Mammary epithelial cell (primary cell): ENCODE measurements at regions of chr6 and their contacts with region 1.

Region 1: DNA sequence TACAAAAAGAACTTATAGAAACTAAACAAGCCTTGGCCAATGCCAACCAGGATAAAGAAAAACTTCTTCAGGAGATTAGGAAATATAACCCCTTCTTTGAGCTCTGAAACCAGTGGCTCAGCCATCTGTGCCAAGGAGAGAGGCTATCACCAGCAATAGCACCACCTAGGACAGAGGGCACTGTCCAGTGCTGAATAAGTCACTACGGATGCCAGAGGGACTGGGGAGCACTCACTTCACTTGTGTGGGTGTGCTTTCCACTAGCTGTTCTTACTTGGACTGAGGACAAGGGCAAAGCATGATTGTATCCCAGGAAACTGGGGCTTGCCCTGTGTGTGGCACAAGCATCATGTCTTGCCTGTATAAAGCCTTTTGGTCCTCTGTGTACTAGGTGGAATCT is 15.5 kb downstream of the TAF11 start:
- DNase-seq: no peak
- H3K4me3 ChIP-seq: no peak overlapping the region
- H3K27ac ChIP-seq: no peak overlapping the region
- H3K4me1 ChIP-seq: no peaks in the 10 kb centered on the region
- H3K27me3 ChIP-seq: no peaks in the 10 kb centered on the region
- CTCF ChIP-seq: no peak

Region 2: DNA sequence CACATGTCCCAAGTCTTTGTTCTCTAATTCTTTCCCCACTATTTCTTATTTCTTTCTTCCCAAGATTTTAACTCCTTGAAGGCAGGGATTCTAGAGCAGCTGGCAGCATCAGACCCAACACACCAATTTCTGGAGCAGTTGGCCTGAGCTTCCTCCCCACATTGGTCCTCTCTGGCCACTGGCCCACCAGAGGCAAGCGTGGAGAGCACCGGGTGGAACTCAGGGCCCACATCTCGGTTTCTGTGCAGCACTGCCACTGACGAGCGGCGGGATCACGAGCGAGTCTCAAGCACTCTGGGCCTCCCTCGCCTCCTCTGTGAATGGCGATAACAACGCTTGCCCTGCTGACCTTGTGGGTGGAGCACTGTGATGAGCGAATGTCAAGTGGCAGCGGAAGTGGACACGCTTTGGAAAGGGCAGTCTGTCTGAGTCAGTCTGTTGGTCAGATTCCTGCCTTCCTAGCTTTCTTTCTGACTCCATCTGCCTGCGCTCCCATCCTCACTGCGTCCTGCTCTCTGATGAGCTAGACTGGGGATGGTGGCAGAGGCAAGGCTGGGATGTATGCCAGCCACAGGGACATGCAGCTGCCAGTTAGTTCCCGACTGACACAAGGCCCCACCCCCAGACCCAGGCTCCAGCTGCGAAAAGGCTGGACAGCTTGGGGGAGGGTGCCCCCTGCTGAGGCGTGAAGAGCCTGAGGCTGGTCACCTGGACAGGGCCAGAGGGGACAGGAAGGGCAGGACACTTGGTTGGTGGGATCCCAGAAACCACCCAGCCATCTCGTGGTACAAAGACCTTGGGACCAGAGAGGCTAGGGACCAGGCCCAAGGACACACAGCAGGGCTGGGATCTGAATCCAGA is 311.7 kb before region 1 on chr6:
- CTCF ChIA-PET with region 1: no interaction called
- dilution Hi-C with region 1: no loop called
- in situ Hi-C with region 1: no loop called
- intact Hi-C with region 1: no loop called
- DNase-seq: no peak
- H3K4me3 ChIP-seq: no peak overlapping the region
- H3K27ac ChIP-seq: no peak overlapping the region
- H3K4me1 ChIP-seq: no peaks in the 10 kb centered on the region
- H3K27me3 ChIP-seq: no peaks in the 10 kb centered on the region
- CTCF ChIP-seq: no peak

Region 3: DNA sequence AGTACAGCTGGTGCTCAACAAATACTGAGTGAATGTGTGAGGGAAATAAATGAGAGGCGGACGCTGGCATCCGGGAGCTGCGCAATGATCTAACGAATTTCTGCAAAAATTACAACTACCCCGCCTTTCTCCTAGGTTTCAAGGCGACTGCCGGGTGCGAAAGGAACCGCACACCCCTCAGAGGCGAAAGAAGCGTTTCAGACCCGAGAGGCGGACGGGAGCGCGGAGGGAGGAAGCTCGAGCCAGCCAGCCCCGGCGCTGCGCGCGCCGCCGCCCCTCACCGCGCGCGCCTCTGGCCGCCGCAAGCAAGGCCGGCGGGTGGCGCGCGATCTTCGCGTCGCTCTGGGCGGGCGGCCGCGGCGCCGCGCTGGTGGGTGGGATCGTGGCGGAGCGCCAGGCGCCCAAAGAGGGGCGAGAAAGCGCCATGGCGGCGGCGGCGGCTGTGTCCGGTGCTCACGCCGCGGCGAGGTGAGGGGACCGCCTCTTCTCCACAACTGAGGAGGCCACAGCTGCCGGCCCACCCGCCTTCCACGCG is 80.6 kb before region 1 on chr6 and contains the start of gene BLTP3A:
- CTCF ChIA-PET with region 1: no interaction called
- dilution Hi-C with region 1: loop called (anchors 5 kb)
- in situ Hi-C with region 1: no loop called
- intact Hi-C with region 1: loop called (anchors 5 kb)
- DNase-seq: peak; percentile 50
- H3K4me3 ChIP-seq: peak within 1 kb of the TSS; percentile 57 to 86 (median 83)
- H3K27ac ChIP-seq: peak within 1 kb of the TSS; percentile 58
- H3K4me1 ChIP-seq: peaks cover 12% of the 10 kb centered on the region
- H3K27me3 ChIP-seq: no peaks in the 10 kb centered on the region
- CTCF ChIP-seq: no peak
- total RNA-seq, gene BLTP3A: 9.6 to 19.2 TPM

Region 4: GRCh38 chr6:35905841-35906498 is 1033.6 kb after region 1 on chr6:
- CTCF ChIA-PET with region 1: no interaction called
- dilution Hi-C with region 1: no loop called
- in situ Hi-C with region 1: no loop called
- intact Hi-C with region 1: no loop called
- DNase-seq: peak; percentile 39
- H3K4me3 ChIP-seq: no peak overlapping the region
- H3K27ac ChIP-seq: no peak overlapping the region
- H3K4me1 ChIP-seq: peaks cover 3% of the 10 kb centered on the region
- H3K27me3 ChIP-seq: no peaks in the 10 kb centered on the region
- CTCF ChIP-seq: no peak